CD8-positive, alpha-beta T cell (primary cell): ENCODE measurements at regions of chr6 and their contacts with region 1.

Region 1: GRCh38 chr6:391559-392440 is at the start of gene IRF4:
- DNase-seq: peak in 6 of 9 experiments; percentile 32 to 59 (median 36)
- ATAC-seq: peak; percentile 39
- H3K4me3 ChIP-seq: peak within 1 kb of the TSS; percentile 77 to 78
- H3K4me3 Mint-ChIP-seq: peak within 1 kb of the TSS; percentile 93
- H3K27ac ChIP-seq: no peak within 1 kb of the TSS
- H3K27ac Mint-ChIP-seq: peak within 1 kb of the TSS; percentile 85
- H3K4me1 ChIP-seq: peaks cover 17% of the 10 kb centered on the region
- H3K4me1 Mint-ChIP-seq: peaks cover 28% of the 10 kb centered on the region
- H3K27me3 ChIP-seq: peaks cover 0 to 10% of the 10 kb centered on the region in 2 experiments
- H3K27me3 Mint-ChIP-seq: peaks cover 7% of the 10 kb centered on the region
- CTCF ChIP-seq: no peak
- total RNA-seq, gene IRF4: 24.7 to 25.6 TPM

Region 2: GRCh38 chr6:403659-404655 is 12.2 kb after region 1 on chr6:
- CTCF ChIA-PET with region 1: interaction called, 10 read pairs
- POLR2A ChIA-PET with region 1: interaction called, 22 read pairs
- intact Hi-C with region 1: no loop called
- DNase-seq: peak in 3 of 9 experiments; percentile 25 to 34 (median 32)
- ATAC-seq: no peak
- H3K4me3 ChIP-seq: peak overlapping the region in 1 of 2 experiments; percentile 14
- H3K4me3 Mint-ChIP-seq: peak overlapping the region; percentile 79
- H3K27ac ChIP-seq: no peak overlapping the region
- H3K27ac Mint-ChIP-seq: peak overlapping the region; percentile 88
- H3K4me1 ChIP-seq: peaks cover 31% of the 10 kb centered on the region
- H3K4me1 Mint-ChIP-seq: peaks cover 34% of the 10 kb centered on the region
- H3K27me3 ChIP-seq: no peaks in the 10 kb centered on the region
- H3K27me3 Mint-ChIP-seq: no peaks in the 10 kb centered on the region
- CTCF ChIP-seq: no peak

Region 3: DNA sequence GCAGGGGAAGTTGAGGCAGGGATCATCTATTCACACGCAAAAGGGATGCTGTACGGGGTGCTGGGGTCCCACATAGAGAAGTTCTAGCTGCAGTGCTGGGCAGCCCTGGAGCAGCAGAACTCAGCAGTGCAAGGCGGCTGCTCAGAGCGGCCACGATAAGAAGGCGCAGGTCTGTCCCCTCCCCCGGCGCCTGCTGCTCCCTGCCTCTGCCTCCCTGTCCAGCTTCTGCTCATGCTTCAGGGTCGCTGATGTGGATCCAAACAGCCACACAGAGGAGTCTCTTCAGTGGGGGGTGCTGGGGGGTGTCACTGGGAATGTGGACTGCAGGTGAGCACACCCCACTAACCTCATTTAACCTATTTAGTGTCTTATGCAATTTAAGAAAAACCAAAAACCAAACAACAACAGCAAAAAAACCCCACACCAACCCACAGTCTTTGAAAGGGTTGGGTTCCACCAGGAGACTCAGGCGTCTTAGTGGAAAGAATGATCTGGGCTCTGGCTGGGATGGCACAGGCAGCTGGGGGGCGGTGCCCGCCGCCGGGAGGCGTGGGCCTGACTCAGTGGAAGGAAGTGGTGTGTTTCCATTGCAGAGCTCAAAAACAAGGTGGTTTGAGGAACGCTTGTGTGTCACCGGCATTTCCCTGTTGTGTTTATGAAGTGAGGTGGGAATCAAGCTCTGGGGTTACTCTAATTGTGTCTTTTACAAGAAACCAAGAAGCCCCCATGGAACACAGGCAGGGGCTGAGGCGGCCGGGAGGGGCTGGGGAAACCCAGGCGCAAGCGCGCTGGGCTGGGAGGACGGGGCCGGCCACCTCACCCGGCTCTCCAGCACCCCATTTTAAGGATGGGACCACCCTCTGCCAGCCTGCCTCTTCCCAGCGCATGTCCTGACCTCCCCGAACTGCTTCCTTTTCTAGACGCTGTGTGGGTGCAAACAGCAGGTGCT is 54.9 kb after region 1 on chr6:
- CTCF ChIA-PET with region 1: interaction called, 3 read pairs
- POLR2A ChIA-PET with region 1: interaction called, 7 read pairs
- intact Hi-C with region 1: loop called (anchors 5 kb)
- DNase-seq: peak in 8 of 9 experiments; percentile 72 to 90 (median 80)
- ATAC-seq: peak; percentile 76
- H3K4me3 ChIP-seq: peak overlapping the region; percentile 37 to 43
- H3K4me3 Mint-ChIP-seq: peak overlapping the region; percentile 71
- H3K27ac ChIP-seq: no peak overlapping the region
- H3K27ac Mint-ChIP-seq: peak overlapping the region; percentile 88
- H3K4me1 ChIP-seq: peaks cover 43% of the 10 kb centered on the region
- H3K4me1 Mint-ChIP-seq: peaks cover 48% of the 10 kb centered on the region
- H3K27me3 ChIP-seq: no peaks in the 10 kb centered on the region
- H3K27me3 Mint-ChIP-seq: no peaks in the 10 kb centered on the region
- CTCF ChIP-seq: no peak

Region 4: DNA sequence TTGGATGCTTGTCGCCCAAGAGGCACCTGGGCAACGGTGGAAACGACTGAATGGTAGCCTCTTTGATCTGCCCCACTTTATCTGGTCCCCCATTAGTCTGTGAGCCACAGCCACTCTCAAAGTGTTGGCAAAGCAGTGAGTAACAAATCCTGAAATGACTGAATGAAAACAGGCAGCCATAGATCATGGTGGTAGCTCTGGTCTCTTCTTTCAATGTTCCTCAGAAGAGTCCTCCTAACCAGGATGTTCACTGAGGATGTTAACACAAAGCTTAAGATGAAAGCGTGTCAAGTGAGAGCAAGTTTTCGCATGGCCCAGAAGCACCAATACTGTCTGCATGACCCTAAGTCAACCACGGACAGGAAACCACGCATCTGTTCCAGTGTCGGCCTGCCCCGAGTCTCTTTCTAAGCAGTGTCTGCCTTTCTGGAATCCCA is 107.0 kb after region 1 on chr6:
- CTCF ChIA-PET with region 1: interaction called, 5 read pairs
- POLR2A ChIA-PET with region 1: no interaction called
- intact Hi-C with region 1: loop called in 1 of 2 experiments (anchors 10 kb)
- DNase-seq: peak in 6 of 9 experiments; percentile 12 to 70 (median 28)
- ATAC-seq: peak; percentile 55
- H3K4me3 ChIP-seq: no peak overlapping the region
- H3K4me3 Mint-ChIP-seq: peak overlapping the region; percentile 49
- H3K27ac ChIP-seq: peak overlapping the region in 1 of 2 experiments; percentile 73
- H3K27ac Mint-ChIP-seq: peak overlapping the region; percentile 83
- H3K4me1 ChIP-seq: peaks cover 41% of the 10 kb centered on the region
- H3K4me1 Mint-ChIP-seq: peaks cover 58% of the 10 kb centered on the region
- H3K27me3 ChIP-seq: no peaks in the 10 kb centered on the region
- H3K27me3 Mint-ChIP-seq: no peaks in the 10 kb centered on the region
- CTCF ChIP-seq: no peak

Region 5: DNA sequence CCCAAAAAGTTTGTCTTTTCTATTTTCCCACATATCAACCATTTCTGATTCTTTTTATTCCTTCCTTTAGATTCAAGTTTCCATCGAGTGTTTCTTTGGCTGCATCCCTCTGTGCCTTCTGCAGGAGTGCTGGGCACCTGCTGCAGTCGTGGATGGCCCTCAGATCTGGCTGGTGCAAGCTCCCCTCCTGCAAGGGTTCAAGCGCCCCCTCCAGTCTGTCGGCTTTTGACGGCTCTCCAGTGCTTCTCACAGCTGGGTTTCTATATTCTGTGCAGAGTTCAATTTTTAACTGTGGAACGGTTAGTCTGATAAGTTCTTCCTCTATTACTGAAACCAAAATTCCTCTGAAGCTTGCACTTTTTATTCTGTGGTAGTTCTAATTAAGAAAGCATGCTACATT is 133.0 kb after region 1 on chr6:
- CTCF ChIA-PET with region 1: interaction called, 7 read pairs
- POLR2A ChIA-PET with region 1: no interaction called
- intact Hi-C with region 1: loop called in 1 of 2 experiments (anchors 1 kb)
- DNase-seq: peak in 7 of 9 experiments; percentile 21 to 60 (median 37)
- ATAC-seq: no peak
- H3K4me3 ChIP-seq: no peak overlapping the region
- H3K4me3 Mint-ChIP-seq: no peak overlapping the region
- H3K27ac ChIP-seq: no peak overlapping the region
- H3K27ac Mint-ChIP-seq: no peak overlapping the region
- H3K4me1 ChIP-seq: no peaks in the 10 kb centered on the region
- H3K4me1 Mint-ChIP-seq: peaks cover 5% of the 10 kb centered on the region
- H3K27me3 ChIP-seq: no peaks in the 10 kb centered on the region
- H3K27me3 Mint-ChIP-seq: no peaks in the 10 kb centered on the region
- CTCF ChIP-seq: no peak

Region 6: GRCh38 chr6:692855-693722 is 301.3 kb after region 1 on chr6 and contains the start of gene EXOC2:
- CTCF ChIA-PET with region 1: no interaction called
- POLR2A ChIA-PET with region 1: no interaction called
- intact Hi-C with region 1: loop called in 1 of 2 experiments (anchors 10 kb)
- DNase-seq: peak; percentile 67 to 89 (median 83)
- ATAC-seq: peak; percentile 77
- H3K4me3 ChIP-seq: peak within 1 kb of the TSS; percentile 72 to 89
- H3K4me3 Mint-ChIP-seq: peak within 1 kb of the TSS; percentile 95
- H3K27ac ChIP-seq: peak within 1 kb of the TSS; percentile 79 to 88
- H3K27ac Mint-ChIP-seq: peak within 1 kb of the TSS; percentile 95
- H3K4me1 ChIP-seq: peaks cover 19% of the 10 kb centered on the region
- H3K4me1 Mint-ChIP-seq: peaks cover 26% of the 10 kb centered on the region
- H3K27me3 ChIP-seq: no peaks in the 10 kb centered on the region
- H3K27me3 Mint-ChIP-seq: no peaks in the 10 kb centered on the region
- CTCF ChIP-seq: no peak
- total RNA-seq, gene EXOC2: 19.3 to 21.2 TPM